Heart right ventricle (tissue), 16 donors: ENCODE measurements at regions of chr10 and their contacts with region 1.

Region 1: DNA sequence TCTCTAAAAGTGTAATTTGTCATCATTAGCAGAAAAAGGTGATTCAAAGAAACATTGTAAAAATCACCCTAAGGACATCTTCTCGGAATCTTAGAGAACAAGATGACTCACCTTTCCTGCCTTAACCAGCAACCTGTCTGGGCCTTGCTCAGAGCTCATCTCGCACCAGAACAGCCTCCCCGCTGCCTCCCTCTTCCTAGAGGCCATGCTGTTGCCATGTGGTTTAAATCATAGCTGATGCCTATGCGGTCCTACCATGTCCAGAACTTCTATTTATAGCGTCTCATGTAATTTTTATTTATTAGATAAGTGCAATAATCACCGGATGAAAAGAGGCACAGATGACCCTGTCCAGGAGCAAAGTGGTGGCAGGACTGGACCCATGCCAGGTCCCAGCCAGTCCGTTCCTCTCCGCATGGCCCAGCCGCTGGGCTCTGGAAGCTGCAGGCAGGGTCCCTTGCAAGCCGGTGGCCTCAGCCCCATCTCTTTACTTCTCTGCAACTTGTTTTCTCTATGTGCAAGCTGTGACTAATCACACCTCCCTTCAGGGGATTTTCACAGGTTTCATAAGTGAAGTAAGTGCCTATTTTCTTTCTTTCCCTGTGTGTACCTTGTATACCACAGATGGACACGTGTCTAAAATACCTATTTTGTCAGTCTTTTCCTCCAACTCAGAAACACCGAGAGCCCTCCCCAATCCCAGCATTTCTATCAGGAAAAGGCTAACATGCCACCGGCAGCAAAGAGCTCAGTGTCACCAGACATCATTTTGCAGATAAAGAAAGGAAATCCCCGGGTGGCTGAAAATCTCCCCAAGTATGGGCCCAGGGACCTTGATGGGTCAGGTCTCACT is 27.1 kb downstream of the KLF6 start:
- DNase-seq: no peak
- ATAC-seq: peak in 1 of 8 donors; percentile 38
- H3K4me3 ChIP-seq: no peak overlapping the region
- H3K27ac ChIP-seq: peak overlapping the region in 1 of 10 donors; percentile 66
- H3K4me1 ChIP-seq: peaks cover 4 to 74% (median 22%) of the 10 kb centered on the region in 9 donors
- H3K27me3 ChIP-seq: no peaks in the 10 kb centered on the region
- CTCF ChIP-seq: no peak

Region 2: DNA sequence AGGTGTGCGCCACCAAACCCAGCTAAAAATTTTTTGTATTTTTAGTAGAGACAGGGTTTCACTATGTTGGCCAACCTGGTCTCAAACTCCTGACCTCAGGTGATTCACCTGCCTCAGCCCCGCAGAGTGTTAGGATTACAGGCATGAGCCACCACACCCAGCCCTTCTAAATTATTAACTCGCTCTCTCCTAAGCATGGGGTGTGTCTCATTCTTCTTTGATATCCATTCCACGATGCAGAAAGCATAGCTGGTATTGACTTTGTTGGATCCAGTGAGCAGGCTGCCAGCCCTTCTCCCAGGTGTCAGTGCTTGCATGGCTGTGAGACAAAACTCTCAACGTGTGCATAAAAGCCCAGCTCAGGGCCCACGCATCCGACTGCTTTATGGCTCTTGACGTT is 944.6 kb before region 1 on chr10:
- intact Hi-C with region 1: no loop called
- DNase-seq: no peak
- ATAC-seq: no peak
- H3K4me3 ChIP-seq: no peak overlapping the region
- H3K27ac ChIP-seq: no peak overlapping the region
- H3K4me1 ChIP-seq: no peaks in the 10 kb centered on the region
- H3K27me3 ChIP-seq: peaks cover 0 to 5% (median 0%) of the 10 kb centered on the region in 7 donors
- CTCF ChIP-seq: no peak

Region 3: DNA sequence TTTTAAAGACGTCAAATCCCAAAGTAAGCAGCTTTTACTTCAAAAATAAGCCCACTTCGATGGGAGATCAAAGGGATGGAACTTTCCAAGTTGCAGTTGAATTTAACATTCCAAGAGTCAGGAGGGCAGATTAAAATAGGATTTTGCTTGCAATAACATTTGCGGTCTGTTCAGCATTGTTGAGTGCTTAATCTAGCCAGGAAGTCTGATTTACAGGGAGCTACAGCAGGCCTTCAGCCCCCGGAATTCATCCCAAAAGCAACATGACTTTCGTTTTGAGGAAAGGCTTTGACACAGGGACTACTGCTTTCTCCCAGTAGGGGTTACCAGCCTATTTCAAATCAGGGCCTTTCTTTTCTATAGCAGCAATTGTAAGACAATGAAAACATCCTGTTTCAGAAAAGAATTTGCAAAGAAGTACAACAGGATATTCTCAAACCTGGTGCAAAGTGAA is 305.7 kb before region 1 on chr10:
- intact Hi-C with region 1: loop called in 2 of 10 experiments (anchors 10 kb)
- DNase-seq: peak in 1 of 2 donors; percentile 52
- ATAC-seq: peak in 7 of 8 donors; percentile 71 to 92 (median 84)
- H3K4me3 ChIP-seq: peak overlapping the region in 3 of 10 donors; percentile 2 to 20 (median 11)
- H3K27ac ChIP-seq: peak overlapping the region; percentile 10 to 85 (median 76)
- H3K4me1 ChIP-seq: peaks cover 0 to 49% (median 28%) of the 10 kb centered on the region in 9 donors
- H3K27me3 ChIP-seq: no peaks in the 10 kb centered on the region
- CTCF ChIP-seq: peak; percentile 21 to 72 (median 48)

Region 4: DNA sequence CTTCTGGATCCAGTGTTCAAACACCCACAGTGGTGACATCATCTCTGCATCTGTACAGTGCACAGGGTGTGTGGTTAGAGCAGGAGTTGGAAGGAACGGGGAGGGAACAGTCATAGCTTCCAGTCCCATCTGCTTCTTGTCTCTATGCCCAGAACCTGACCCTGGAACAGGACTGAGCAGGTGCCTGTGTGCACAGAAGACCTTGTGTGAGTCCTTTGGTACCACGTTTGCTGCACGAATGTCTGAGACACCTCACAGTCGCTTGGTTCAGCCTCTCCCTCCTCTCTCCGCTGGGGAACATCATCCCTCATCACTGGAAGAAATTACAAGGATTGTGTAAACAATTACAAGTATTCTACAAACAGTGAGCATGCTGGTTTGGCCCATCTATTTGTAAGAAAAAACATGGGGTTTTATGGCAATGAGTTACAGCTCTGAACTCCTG is 270.2 kb after region 1 on chr10:
- intact Hi-C with region 1: no loop called
- DNase-seq: no peak
- ATAC-seq: no peak
- H3K4me3 ChIP-seq: no peak overlapping the region
- H3K27ac ChIP-seq: no peak overlapping the region
- H3K4me1 ChIP-seq: peaks cover 0 to 9% (median 0%) of the 10 kb centered on the region in 9 donors
- H3K27me3 ChIP-seq: no peaks in the 10 kb centered on the region
- CTCF ChIP-seq: no peak